GM12878 (cell line): ENCODE measurements at regions of chr13 and their contacts with region 1.

Region 1: DNA sequence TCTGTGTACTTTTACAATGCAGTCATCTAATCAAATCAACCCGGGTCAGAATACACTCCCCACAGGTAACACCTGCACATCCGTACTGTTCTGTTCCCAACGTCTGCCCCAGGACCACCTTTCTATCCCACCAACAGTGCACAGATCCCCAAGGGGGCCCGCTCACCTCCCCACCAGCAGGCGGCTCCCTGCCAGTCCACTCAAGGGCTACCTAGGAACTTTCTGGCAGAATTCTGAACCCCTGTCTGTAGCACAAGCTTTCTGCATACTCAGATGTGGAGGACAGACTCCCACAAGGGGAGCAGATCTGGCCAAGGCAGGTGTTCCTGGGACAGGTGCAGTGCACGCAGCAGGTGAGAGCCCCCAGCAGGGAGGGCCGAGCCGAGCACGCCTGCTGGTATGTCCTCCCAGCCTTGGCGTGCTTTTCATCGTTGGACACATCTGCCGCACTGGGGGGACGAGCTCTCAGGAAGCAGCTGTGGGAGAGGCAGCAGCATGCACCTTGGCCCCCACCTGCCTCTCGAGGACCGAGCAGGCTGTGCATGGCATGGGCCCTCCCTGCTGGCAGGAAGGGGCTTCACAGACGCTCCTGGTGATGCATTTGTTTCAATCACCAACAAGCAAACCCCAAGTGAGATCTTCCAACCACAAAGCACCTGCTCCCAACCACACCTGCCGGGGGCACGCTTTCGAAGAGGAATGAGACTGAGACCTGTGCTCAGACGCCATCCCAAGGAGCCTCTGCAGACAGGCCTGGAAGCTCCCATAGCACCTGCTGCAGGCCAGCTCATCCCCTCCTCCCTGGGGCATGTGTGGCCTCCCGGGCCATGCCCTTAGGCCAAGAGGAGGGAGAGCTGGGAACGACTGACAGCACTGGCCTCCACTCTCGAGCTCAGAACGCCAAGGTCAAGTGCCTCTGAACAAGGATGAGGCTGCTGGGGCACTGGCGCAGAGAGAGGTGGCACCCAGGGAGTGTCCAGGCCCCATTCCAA is 35.9 kb downstream of the RAB20 start:
- DNase-seq: peak; percentile 35
- ATAC-seq: peak; percentile 90
- H3K4me3 ChIP-seq: no peak overlapping the region
- H3K27ac ChIP-seq: no peak overlapping the region
- H3K4me1 ChIP-seq: peaks cover 18% of the 10 kb centered on the region
- H3K27me3 ChIP-seq: no peaks in the 10 kb centered on the region
- CTCF ChIP-seq: peak; percentile 25 to 39 (median 26); a peak in 4 of 6 replicates
- EP300 ChIP-seq: peak in 1 of 2 experiments; percentile 60; a peak in 1 of 4 replicates
- POLR2A ChIP-seq: no peak
- RAD21 ChIP-seq: peak; percentile 63

Region 2: DNA sequence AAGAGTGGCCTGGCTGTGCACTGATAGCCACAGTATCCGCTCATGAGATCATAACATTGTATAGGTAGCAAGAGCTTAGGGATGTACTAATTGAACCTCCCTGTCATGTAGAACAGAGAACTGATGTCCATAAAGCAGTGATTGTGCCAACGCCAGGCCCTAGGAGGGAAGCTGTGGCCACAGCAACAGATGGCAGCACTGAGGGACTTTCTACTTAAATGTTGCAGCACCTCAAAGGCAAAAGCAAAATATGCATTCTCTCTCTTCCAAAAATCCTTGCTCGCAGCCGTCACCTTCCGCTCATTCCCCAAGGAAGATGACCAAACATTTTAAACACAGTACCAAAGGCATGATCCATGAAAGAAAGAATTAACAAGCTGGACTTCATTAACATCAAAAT is 250.9 kb before region 1 on chr13:
- CTCF ChIA-PET with region 1: no interaction called
- POLR2A ChIA-PET with region 1: no interaction called
- RAD21 ChIA-PET with region 1: no interaction called
- SMC1A ChIA-PET with region 1: no interaction called
- in situ Hi-C with region 1: no loop called
- intact Hi-C with region 1: no loop called
- DNase-seq: no peak
- ATAC-seq: peak; percentile 41; the same call in 2 of the 3 replicates
- H3K4me3 ChIP-seq: no peak overlapping the region
- H3K27ac ChIP-seq: no peak overlapping the region
- H3K4me1 ChIP-seq: no peaks in the 10 kb centered on the region
- H3K27me3 ChIP-seq: peaks cover 0 to 2% of the 10 kb centered on the region in 2 experiments; a peak in 3 of 4 replicates
- CTCF ChIP-seq: 0 out of 6 replicates have a peak, but pooled peaks of 1 of the 3 experiments have one; percentile 9
- EP300 ChIP-seq: no peak
- POLR2A ChIP-seq: no peak
- RAD21 ChIP-seq: no peak

Region 3: DNA sequence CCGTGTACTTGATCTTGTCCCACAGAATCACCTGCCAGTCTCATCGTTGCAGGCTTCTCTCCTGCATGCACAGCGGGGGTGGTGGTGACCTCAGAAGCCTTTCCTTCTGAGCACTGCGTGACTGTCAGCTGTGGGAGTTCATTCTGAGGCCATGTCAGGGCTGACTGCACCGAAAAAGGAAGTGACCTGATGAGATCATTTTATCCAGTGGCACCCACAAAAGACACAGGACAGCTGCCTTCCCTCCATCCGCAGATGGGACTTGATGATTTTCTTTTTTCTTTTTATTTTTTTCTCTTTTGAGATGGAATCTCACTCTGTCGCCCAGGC is 53.8 kb before region 1 on chr13:
- CTCF ChIA-PET with region 1: interaction called, 4 read pairs
- POLR2A ChIA-PET with region 1: no interaction called
- RAD21 ChIA-PET with region 1: no interaction called
- SMC1A ChIA-PET with region 1: interaction called, 3 read pairs
- in situ Hi-C with region 1: no loop called
- intact Hi-C with region 1: loop called (anchors 5 kb)
- DNase-seq: peak; percentile 87
- ATAC-seq: peak; percentile 96
- H3K4me3 ChIP-seq: peak overlapping the region; percentile 42; the same call in 1 of the 2 replicates
- H3K27ac ChIP-seq: peak overlapping the region; percentile 60
- H3K4me1 ChIP-seq: peaks cover 37% of the 10 kb centered on the region
- H3K27me3 ChIP-seq: no peaks in the 10 kb centered on the region
- CTCF ChIP-seq: no peak
- EP300 ChIP-seq: peak; percentile 100
- POLR2A ChIP-seq: peak; percentile 68
- RAD21 ChIP-seq: peak; percentile 3; the same call in 1 of the 2 replicates

Region 4: DNA sequence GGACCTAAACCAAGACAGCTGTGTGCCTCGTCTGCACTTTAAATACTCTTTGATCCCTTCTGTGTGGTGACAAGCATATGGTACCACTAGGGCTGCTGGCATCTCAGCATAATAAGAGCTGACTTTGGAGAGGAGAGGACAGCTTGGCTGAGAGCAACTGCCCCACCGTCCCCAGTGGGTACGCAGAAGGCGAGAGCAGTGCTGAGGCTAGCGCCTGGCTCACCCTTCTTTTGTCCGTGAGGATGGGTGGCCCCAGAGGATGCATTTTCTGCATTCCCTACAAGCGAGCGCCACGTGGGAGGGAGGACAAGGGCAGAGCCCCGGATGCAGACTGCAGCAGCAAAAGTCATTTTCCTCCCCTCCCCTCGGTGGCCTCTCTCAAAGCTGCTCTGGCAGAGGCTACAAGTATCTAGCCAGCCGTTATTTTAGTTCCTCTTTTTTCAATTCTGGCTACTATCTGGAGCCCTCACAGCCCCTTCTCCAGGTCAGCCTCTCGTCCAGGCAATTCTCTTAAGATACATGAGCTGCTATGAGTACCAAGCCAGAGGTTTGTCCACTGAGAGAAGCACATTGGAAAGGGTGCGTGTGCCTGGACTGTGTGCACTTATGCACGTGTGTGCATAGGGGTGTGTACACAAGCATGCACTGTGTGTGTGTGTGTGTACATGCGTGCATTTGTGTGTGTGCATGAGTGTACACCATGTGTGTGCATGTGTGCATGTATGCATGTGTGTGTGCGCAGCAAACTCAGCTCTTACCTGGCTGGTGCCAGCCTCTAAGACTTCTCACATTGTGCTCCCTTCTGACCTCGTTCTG is 15.4 kb before region 1 on chr13:
- CTCF ChIA-PET with region 1: interaction called, 11 read pairs
- POLR2A ChIA-PET with region 1: interaction called, 8 read pairs
- RAD21 ChIA-PET with region 1: interaction called, 4 read pairs
- SMC1A ChIA-PET with region 1: interaction called, 4 read pairs
- in situ Hi-C with region 1: no loop called
- intact Hi-C with region 1: no loop called
- DNase-seq: no peak
- ATAC-seq: peak; percentile 81
- H3K4me3 ChIP-seq: no peak overlapping the region
- H3K27ac ChIP-seq: no peak overlapping the region
- H3K4me1 ChIP-seq: peaks cover under 1% of the 10 kb centered on the region; the same call in 1 of the 2 replicates
- H3K27me3 ChIP-seq: no peaks in the 10 kb centered on the region; a peak in 1 of 4 replicates
- CTCF ChIP-seq: no peak
- EP300 ChIP-seq: no peak
- POLR2A ChIP-seq: no peak
- RAD21 ChIP-seq: no peak

Region 5: DNA sequence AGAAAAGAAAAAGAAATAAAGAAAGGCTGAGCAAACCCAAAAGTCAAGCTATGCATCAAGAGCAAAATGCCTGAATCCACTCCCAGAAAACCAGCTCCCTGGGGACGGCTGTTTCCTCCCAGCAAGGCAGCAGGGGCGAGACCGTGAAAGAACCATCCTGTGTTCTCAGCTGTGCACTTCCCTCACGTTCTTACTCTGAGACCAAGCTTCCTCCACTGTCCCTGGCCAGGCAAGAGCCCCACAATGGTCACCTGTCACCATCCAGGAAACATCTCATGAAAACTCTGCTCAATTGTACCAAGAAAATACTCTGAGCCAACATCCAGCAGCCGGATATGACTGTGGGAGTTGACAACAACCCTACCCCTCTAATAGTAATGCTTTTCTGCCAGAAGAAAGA is 13.0 kb after region 1 on chr13:
- CTCF ChIA-PET with region 1: interaction called, 3 read pairs
- POLR2A ChIA-PET with region 1: interaction called, 4 read pairs
- RAD21 ChIA-PET with region 1: interaction called, 10 read pairs
- SMC1A ChIA-PET with region 1: interaction called, 31 read pairs
- in situ Hi-C with region 1: no loop called
- intact Hi-C with region 1: no loop called
- DNase-seq: no peak
- ATAC-seq: peak; percentile 70
- H3K4me3 ChIP-seq: no peak overlapping the region
- H3K27ac ChIP-seq: no peak overlapping the region
- H3K4me1 ChIP-seq: peaks cover 13% of the 10 kb centered on the region
- H3K27me3 ChIP-seq: no peaks in the 10 kb centered on the region
- CTCF ChIP-seq: no peak
- EP300 ChIP-seq: no peak
- POLR2A ChIP-seq: no peak
- RAD21 ChIP-seq: no peak